PC-9 (cell line): ENCODE measurements at regions of chr11 and their contacts with region 1.

Region 1: GRCh38 chr11:48001438-48002021 is 21.2 kb downstream of the PTPRJ start:
- DNase-seq: no peak
- H3K4me3 ChIP-seq: no peak overlapping the region
- H3K27ac ChIP-seq: no peak overlapping the region
- H3K4me1 ChIP-seq: peaks cover 27% of the 10 kb centered on the region
- H3K27me3 ChIP-seq: no peaks in the 10 kb centered on the region
- CTCF ChIP-seq: no peak

Region 2: GRCh38 chr11:48063424-48063978 is 62.0 kb after region 1 on chr11:
- CTCF ChIA-PET with region 1: no interaction called
- POLR2A ChIA-PET with region 1: interaction called, 12 read pairs
- intact Hi-C with region 1: no loop called
- DNase-seq: peak; percentile 62 to 98
- H3K4me3 ChIP-seq: peak overlapping the region; percentile 27; the same call in 1 of the 2 replicates
- H3K27ac ChIP-seq: peak overlapping the region; percentile 95
- H3K4me1 ChIP-seq: peaks cover 73% of the 10 kb centered on the region
- H3K27me3 ChIP-seq: no peaks in the 10 kb centered on the region
- CTCF ChIP-seq: no peak

Region 3: DNA sequence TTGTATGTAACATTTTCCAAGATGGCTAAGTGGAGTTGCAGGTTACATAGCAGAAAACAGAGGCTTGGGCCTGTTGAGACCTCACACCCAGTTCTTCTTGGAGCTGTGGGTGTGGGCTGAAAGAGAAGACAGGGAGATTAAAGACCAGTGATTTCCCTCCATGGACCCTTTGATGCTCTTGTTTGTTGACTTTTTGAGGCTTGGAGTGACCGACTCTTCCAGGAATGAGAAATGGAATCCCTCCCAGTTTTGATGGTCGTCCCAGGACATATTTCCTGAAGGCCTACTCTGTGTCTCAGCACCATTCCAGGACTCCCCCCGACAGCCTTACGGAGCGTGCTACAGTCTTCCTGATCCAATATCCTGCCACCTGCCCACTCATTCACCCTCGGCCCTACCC is 75.7 kb after region 1 on chr11:
- CTCF ChIA-PET with region 1: no interaction called
- POLR2A ChIA-PET with region 1: interaction called, 11 read pairs
- intact Hi-C with region 1: no loop called
- DNase-seq: no peak
- H3K4me3 ChIP-seq: no peak overlapping the region
- H3K27ac ChIP-seq: no peak overlapping the region
- H3K4me1 ChIP-seq: 0 out of 2 replicates have a peak, but pooled peaks cover 3% of the 10 kb centered on the region
- H3K27me3 ChIP-seq: no peaks in the 10 kb centered on the region
- CTCF ChIP-seq: no peak

Region 4: DNA sequence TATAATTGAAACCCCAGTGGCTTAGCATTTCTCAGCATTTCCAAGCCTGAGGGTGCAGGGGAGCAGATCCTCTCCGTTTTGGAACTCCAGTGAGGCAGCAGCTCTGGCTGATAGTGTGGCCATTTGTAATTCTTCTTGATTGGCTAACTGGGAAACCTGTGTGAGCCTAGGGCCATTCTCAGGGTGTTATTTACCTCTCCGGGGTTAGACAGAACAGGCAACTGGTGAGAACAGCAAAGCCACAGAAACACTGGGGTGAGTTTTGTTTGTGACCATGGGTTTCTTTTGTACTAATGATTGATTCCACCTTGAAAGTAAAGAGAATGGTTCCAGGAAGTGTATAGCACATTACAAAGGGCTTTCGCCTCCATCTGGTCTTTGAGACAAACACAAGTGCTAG is 241.0 kb after region 1 on chr11:
- CTCF ChIA-PET with region 1: no interaction called
- POLR2A ChIA-PET with region 1: no interaction called
- intact Hi-C with region 1: no loop called
- DNase-seq: no peak
- H3K4me3 ChIP-seq: no peak overlapping the region
- H3K27ac ChIP-seq: no peak overlapping the region
- H3K4me1 ChIP-seq: no peaks in the 10 kb centered on the region
- H3K27me3 ChIP-seq: peaks cover 9% of the 10 kb centered on the region
- CTCF ChIP-seq: no peak